Activated B cell treated with CpG ODN at 0.5 μM for 24 hours (primary cell): ENCODE measurements at regions of chr16 and their contacts with region 1.

Region 1: GRCh38 chr16:84726079-84726668 is 26.4 kb downstream of the USP10 start:
- DNase-seq: peak; percentile 73
- ATAC-seq: peak; percentile 51
- H3K4me3 Mint-ChIP-seq: peak overlapping the region; percentile 81
- H3K27ac Mint-ChIP-seq: peak overlapping the region; percentile 86
- H3K4me1 Mint-ChIP-seq: peaks cover 84% of the 10 kb centered on the region
- H3K27me3 Mint-ChIP-seq: no peaks in the 10 kb centered on the region
- CTCF ChIP-seq: peak; percentile 75

Region 2: GRCh38 chr16:84277237-84277823 is 448.8 kb before region 1 on chr16:
- CTCF ChIA-PET with region 1: interaction called, 3 read pairs
- POLR2A ChIA-PET with region 1: no interaction called
- intact Hi-C with region 1: loop called (anchors 5 kb)
- DNase-seq: peak; percentile 38
- ATAC-seq: no peak
- H3K4me3 Mint-ChIP-seq: no peak overlapping the region
- H3K27ac Mint-ChIP-seq: no peak overlapping the region
- H3K4me1 Mint-ChIP-seq: no peaks in the 10 kb centered on the region
- H3K27me3 Mint-ChIP-seq: peaks cover 2% of the 10 kb centered on the region
- CTCF ChIP-seq: peak; percentile 61

Region 3: GRCh38 chr16:84663433-84664101 is 62.6 kb before region 1 on chr16:
- CTCF ChIA-PET with region 1: interaction called, 19 read pairs
- POLR2A ChIA-PET with region 1: no interaction called
- intact Hi-C with region 1: no loop called
- DNase-seq: no peak
- ATAC-seq: peak; percentile 87
- H3K4me3 Mint-ChIP-seq: peak overlapping the region; percentile 54
- H3K27ac Mint-ChIP-seq: peak overlapping the region; percentile 47
- H3K4me1 Mint-ChIP-seq: peaks cover 32% of the 10 kb centered on the region
- H3K27me3 Mint-ChIP-seq: no peaks in the 10 kb centered on the region
- CTCF ChIP-seq: no peak

Region 4: DNA sequence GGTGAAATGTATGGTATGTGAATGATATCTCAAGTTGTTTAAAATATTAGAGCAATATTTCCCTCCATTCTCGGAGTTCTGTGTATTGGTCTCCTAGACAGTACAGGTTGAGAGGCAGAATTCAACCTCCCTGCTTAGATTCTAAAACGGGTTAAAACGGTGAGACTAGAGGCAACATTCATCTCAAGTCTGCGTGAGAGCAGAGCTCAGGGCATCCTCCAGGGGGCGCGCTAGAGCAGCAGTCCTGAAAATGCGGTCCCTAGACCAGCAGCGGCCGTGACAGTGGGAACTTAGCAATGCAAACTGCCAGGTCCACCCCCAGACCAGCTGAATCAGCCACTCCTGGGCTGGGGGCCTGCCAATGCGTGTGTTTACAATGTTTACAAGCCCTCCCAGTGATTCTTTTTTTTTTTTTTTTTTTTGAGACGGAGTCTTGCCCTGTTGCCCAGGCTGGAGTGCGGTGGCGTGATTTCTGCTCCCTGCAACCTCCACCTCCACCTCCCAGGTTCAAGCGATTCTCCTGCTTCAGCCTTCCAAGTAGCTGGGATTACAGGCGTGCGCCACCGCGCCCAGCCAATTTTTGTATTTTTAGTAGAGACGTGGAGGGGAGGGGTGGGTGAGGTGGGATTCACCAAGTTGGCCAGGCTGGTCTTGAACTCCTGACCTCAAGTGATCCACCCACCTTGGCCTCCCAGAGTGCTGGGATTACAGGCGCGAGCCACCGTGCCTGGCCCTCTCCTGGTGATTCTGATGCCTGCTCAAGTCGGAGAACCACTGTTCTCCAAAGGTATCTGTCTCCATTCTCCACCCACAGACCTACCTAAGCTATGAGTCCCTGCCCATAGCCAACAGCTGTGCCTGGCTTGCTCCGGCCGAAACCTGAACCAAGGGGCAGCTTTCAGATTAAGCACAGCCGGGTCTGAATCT is 53.6 kb before region 1 on chr16:
- CTCF ChIA-PET with region 1: interaction called, 82 read pairs
- POLR2A ChIA-PET with region 1: interaction called, 5 read pairs
- intact Hi-C with region 1: loop called (anchors 1 kb)
- DNase-seq: peak; percentile 75
- ATAC-seq: peak; percentile 91
- H3K4me3 Mint-ChIP-seq: no peak overlapping the region
- H3K27ac Mint-ChIP-seq: no peak overlapping the region
- H3K4me1 Mint-ChIP-seq: peaks cover 9% of the 10 kb centered on the region
- H3K27me3 Mint-ChIP-seq: no peaks in the 10 kb centered on the region
- CTCF ChIP-seq: peak; percentile 90

Region 5: GRCh38 chr16:84699712-84700445 is 26.3 kb before region 1 on chr16 and contains the start of gene USP10:
- CTCF ChIA-PET with region 1: interaction called, 14 read pairs
- POLR2A ChIA-PET with region 1: interaction called, 12 read pairs
- intact Hi-C with region 1: loop called (anchors 1 kb)
- DNase-seq: peak; percentile 92
- ATAC-seq: peak; percentile 77
- H3K4me3 Mint-ChIP-seq: peak within 1 kb of the TSS; percentile 94
- H3K27ac Mint-ChIP-seq: peak within 1 kb of the TSS; percentile 92
- H3K4me1 Mint-ChIP-seq: peaks cover 48% of the 10 kb centered on the region
- H3K27me3 Mint-ChIP-seq: no peaks in the 10 kb centered on the region
- CTCF ChIP-seq: no peak
- total RNA-seq, gene USP10: 138 and 147 TPM in 2 replicates

Region 6: DNA sequence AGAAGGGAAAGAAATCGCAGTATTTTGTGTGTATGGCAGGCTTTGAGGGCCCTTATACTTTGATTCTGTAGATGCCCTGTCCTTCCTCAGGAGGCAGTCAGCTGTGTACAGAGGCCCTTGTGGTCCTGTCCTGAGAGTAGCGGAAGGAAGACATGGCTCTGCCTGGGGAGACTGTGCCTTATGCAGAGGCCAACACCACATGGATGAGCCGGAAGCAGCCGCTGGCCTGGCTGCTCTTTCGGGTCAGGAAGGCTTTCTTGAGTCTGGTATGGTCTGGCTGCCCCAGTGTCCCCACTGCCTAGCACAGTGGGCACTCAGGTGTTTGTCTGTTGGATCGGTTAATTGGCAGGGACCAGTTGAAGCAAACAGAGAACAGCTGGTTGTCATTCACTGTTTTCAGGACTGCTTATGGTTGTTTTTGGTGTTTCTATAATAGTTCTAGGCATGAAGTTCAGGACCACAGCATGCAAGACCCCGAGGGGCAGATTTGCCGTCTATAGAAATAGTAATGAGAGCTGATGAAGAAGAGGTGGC is 14.0 kb before region 1 on chr16:
- CTCF ChIA-PET with region 1: interaction called, 22 read pairs
- POLR2A ChIA-PET with region 1: interaction called, 7 read pairs
- intact Hi-C with region 1: no loop called
- DNase-seq: no peak
- ATAC-seq: no peak
- H3K4me3 Mint-ChIP-seq: peak overlapping the region; percentile 17
- H3K27ac Mint-ChIP-seq: no peak overlapping the region
- H3K4me1 Mint-ChIP-seq: peaks cover 80% of the 10 kb centered on the region
- H3K27me3 Mint-ChIP-seq: no peaks in the 10 kb centered on the region
- CTCF ChIP-seq: no peak

Region 7: GRCh38 chr16:84738255-84739038 is 12.3 kb after region 1 on chr16:
- CTCF ChIA-PET with region 1: interaction called, 53 read pairs
- POLR2A ChIA-PET with region 1: interaction called, 5 read pairs
- intact Hi-C with region 1: loop called (anchors 1 kb)
- DNase-seq: peak; percentile 57
- ATAC-seq: peak; percentile 92
- H3K4me3 Mint-ChIP-seq: no peak overlapping the region
- H3K27ac Mint-ChIP-seq: peak overlapping the region; percentile 68
- H3K4me1 Mint-ChIP-seq: peaks cover 39% of the 10 kb centered on the region
- H3K27me3 Mint-ChIP-seq: no peaks in the 10 kb centered on the region
- CTCF ChIP-seq: peak; percentile 80